IMR-90 (cell line): ENCODE measurements at regions of chr13 and their contacts with region 1.

Region 1: DNA sequence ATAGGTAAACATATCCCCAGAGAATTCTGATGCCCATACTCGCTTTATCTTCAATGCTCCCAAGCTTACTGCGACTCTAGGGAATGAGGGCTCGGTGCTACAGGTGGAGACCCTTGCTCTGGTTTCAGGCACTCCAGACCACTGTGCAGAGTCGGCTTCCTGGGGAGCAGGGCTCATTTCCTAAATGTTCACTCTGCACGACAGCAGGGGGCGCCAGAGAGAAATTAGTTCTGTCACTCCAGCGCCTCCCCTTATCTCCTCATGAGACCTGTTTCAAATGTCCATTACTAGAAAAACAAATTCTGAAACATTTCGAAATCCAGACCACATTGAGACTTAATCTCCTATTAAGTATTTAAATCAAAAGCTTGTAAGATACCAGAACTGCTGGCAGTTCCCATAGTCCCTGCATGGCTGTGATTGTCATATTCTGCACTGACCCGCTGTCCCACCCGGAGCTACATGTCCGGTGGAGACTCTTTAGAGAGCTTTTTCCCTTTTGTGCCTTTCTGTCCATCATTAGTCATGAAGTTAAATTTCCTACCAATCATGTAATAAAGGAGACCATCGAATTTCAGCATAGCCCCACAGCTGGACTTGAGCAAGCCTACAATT is 22.4 kb downstream of the EPSTI1 start:
- DNase-seq: peak; percentile 69
- ATAC-seq: peak; percentile 89
- H3K4me3 ChIP-seq: no peak overlapping the region
- H3K27ac ChIP-seq: no peak overlapping the region
- H3K4me1 ChIP-seq: peaks cover 12% of the 10 kb centered on the region
- H3K27me3 ChIP-seq: no peaks in the 10 kb centered on the region
- CTCF ChIP-seq: peak; percentile 77
- POLR2A ChIP-seq: no peak
- RAD21 ChIP-seq: peak; percentile 71

Region 2: DNA sequence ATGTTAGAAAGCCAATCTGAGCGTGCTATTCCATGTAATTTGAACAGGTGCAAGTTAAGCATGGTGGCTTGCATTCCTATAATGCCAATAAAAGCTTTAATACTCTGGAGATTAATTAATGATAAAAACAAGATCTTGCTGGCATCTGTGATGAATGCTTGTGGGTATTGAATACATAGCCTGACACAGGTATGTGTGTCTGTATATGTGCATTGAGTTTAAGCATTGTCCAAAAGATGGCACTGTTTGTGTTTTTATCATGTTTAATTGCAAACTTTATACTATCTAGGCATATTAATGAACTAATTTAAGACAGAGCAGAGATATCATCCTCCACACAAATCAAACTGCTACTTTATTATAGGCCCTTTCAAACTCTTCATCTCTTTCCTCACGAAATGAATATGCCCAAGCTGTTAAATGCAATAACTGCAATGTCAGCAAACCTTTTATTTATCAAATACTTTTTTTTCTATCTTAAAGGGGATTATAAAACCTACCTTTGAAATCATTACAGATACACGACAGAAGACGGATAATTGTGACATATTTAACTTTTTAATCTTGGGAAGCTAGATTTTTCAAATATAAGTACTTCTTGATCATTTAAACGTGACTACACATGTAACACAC is 309.2 kb before region 1 on chr13:
- CTCF ChIA-PET with region 1: no interaction called
- POLR2A ChIA-PET with region 1: no interaction called
- dilution Hi-C with region 1: no loop called
- in situ Hi-C with region 1: no loop called
- intact Hi-C with region 1: loop called (anchors 10 kb)
- DNase-seq: peak; percentile 27
- ATAC-seq: peak; percentile 65
- H3K4me3 ChIP-seq: no peak overlapping the region
- H3K27ac ChIP-seq: no peak overlapping the region
- H3K4me1 ChIP-seq: no peaks in the 10 kb centered on the region
- H3K27me3 ChIP-seq: peaks cover 31% of the 10 kb centered on the region
- CTCF ChIP-seq: peak; percentile 53
- POLR2A ChIP-seq: no peak
- RAD21 ChIP-seq: peak; percentile 60

Region 3: DNA sequence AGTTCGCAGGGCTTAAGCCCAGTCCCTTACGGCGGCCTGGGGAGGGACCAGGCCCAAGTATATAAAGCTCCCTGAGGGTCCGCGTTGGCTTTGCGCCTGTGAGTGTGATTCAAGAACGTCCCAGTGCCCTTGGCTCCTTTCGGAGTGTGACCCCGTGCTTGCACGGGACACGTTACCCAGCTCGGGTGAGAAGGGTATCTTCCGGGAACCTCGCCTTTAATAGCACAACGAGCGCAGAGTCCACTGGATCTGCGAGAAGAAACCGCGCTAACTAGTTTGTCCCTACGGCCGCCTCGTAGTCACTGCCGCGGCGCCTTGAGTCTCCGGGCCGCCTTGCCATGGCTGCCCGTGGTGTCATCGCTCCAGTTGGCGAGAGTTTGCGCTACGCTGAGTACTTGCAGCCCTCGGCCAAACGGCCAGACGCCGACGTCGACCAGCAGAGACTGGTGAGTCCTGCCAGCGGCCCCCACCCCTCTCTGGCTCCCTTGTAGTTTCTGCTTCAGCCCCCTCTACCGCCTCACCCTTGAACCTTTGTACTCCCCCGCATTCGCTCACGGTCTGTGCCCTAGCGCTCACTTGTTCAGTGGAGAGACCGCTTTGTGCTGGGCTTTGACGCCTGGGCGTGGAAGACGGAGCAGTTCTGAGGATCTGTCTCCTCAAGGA is 53.8 kb after region 1 on chr13 and contains the start of gene DNAJC15:
- CTCF ChIA-PET with region 1: no interaction called
- POLR2A ChIA-PET with region 1: no interaction called
- dilution Hi-C with region 1: no loop called
- in situ Hi-C with region 1: no loop called
- intact Hi-C with region 1: loop called (anchors 2 kb)
- DNase-seq: peak; percentile 83
- ATAC-seq: peak; percentile 88
- H3K4me3 ChIP-seq: peak within 1 kb of the TSS; percentile 59
- H3K27ac ChIP-seq: peak within 1 kb of the TSS; percentile 95
- H3K4me1 ChIP-seq: peaks cover 3% of the 10 kb centered on the region
- H3K27me3 ChIP-seq: no peaks in the 10 kb centered on the region
- CTCF ChIP-seq: 0 out of 2 replicates have a peak, but pooled peaks have one; percentile 0
- POLR2A ChIP-seq: peak; percentile 44
- RAD21 ChIP-seq: no peak
- total RNA-seq, gene DNAJC15: 7.0 and 12.5 TPM in 2 replicates

Region 4: GRCh38 chr13:43036351-43037250 is 66.9 kb after region 1 on chr13:
- CTCF ChIA-PET with region 1: no interaction called
- POLR2A ChIA-PET with region 1: no interaction called
- dilution Hi-C with region 1: no loop called
- in situ Hi-C with region 1: no loop called
- intact Hi-C with region 1: no loop called
- DNase-seq: no peak
- ATAC-seq: no peak; the same call in 1 of the 2 replicates
- H3K4me3 ChIP-seq: no peak overlapping the region
- H3K27ac ChIP-seq: no peak overlapping the region
- H3K4me1 ChIP-seq: 0 out of 2 replicates have a peak, but pooled peaks cover 1% of the 10 kb centered on the region
- H3K27me3 ChIP-seq: no peaks in the 10 kb centered on the region
- CTCF ChIP-seq: no peak
- POLR2A ChIP-seq: no peak
- RAD21 ChIP-seq: no peak

Region 5: DNA sequence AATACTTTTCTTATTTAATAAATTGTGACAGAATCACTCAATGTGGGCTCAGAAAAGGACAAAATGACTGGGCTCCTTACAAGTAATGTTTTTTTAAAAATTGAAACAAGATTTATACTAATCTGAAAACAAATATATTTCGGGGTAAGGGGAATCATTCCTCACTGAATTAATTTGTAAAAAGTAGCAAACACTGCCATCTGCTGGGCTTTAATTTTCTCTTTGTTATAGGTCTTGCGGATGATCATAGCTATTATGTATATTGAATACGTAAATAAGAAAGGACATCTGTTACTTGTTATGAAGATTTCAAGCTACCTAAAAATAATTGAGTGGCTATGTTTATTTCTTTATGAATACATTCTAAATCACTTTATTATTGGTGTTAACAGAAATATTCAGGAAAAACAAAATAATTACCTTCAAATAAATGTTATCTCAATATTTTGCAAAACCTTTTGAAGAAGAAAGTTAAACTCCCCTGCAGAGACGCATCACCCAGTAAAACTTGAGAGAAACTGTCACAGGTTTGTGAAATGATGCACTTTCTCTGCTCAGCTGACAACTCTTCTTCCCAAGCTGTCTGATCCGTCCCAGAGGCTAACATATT is 834.9 kb after region 1 on chr13:
- CTCF ChIA-PET with region 1: no interaction called
- POLR2A ChIA-PET with region 1: no interaction called
- dilution Hi-C with region 1: no loop called
- in situ Hi-C with region 1: no loop called
- intact Hi-C with region 1: loop called (anchors 5 kb)
- DNase-seq: peak; percentile 78
- ATAC-seq: peak; percentile 82
- H3K4me3 ChIP-seq: peak overlapping the region; percentile 3; the same call in 1 of the 2 replicates
- H3K27ac ChIP-seq: peak overlapping the region; percentile 50; the same call in 1 of the 2 replicates
- H3K4me1 ChIP-seq: peaks cover 2% of the 10 kb centered on the region; the same call in 1 of the 2 replicates
- H3K27me3 ChIP-seq: no peaks in the 10 kb centered on the region
- CTCF ChIP-seq: peak; percentile 64
- POLR2A ChIP-seq: no peak
- RAD21 ChIP-seq: peak; percentile 64